ENCODE measurements at regions of chr17 and their contacts with region 1.

Region 1: DNA sequence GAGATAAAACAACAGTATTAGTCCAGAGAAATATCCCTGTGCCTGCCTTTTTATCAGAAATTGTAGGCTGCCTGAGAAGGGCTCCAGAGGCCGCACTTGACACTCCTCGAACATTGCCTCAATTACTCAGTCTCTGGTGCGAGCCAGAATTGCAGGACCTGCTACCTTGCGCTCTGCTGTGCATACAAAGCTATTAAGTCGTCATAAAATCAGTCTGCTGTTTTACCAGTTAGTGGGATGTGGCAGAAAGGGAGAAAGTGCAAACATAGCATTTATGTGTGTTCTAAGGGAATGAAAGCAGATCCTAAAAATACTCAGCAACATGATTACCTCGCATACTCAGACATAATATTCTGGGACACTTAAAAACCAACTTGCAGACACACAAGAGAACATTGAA is 70.6 kb downstream of the TMC6 start:
- DNase-seq: no peak
- H3K4me3 ChIP-seq: no peak overlapping the region
- H3K27ac ChIP-seq: no peak overlapping the region
- H3K4me1 ChIP-seq: peaks cover 17% of the 10 kb centered on the region
- H3K27me3 ChIP-seq: no peaks in the 10 kb centered on the region
- CTCF ChIP-seq: no peak
- POLR2A ChIP-seq: no peak

Region 2: GRCh38 chr17:78040440-78041385 is 17.3 kb before region 1 on chr17:
- CTCF ChIA-PET with region 1: interaction called, 13 read pairs
- POLR2A ChIA-PET with region 1: no interaction called
- dilution Hi-C with region 1: no loop called
- intact Hi-C with region 1: no loop called
- DNase-seq: peak; percentile 85
- H3K4me3 ChIP-seq: peak overlapping the region; percentile 11 to 79 (median 54)
- H3K27ac ChIP-seq: peak overlapping the region; percentile 87
- H3K4me1 ChIP-seq: peaks cover 21% of the 10 kb centered on the region
- H3K27me3 ChIP-seq: no peaks in the 10 kb centered on the region
- CTCF ChIP-seq: no peak
- POLR2A ChIP-seq: peak; percentile 92

Measured in endothelial cell of umbilical vein (primary cell).